ENCODE measurements at regions of chr14 and their contacts with region 1.

Region 1: DNA sequence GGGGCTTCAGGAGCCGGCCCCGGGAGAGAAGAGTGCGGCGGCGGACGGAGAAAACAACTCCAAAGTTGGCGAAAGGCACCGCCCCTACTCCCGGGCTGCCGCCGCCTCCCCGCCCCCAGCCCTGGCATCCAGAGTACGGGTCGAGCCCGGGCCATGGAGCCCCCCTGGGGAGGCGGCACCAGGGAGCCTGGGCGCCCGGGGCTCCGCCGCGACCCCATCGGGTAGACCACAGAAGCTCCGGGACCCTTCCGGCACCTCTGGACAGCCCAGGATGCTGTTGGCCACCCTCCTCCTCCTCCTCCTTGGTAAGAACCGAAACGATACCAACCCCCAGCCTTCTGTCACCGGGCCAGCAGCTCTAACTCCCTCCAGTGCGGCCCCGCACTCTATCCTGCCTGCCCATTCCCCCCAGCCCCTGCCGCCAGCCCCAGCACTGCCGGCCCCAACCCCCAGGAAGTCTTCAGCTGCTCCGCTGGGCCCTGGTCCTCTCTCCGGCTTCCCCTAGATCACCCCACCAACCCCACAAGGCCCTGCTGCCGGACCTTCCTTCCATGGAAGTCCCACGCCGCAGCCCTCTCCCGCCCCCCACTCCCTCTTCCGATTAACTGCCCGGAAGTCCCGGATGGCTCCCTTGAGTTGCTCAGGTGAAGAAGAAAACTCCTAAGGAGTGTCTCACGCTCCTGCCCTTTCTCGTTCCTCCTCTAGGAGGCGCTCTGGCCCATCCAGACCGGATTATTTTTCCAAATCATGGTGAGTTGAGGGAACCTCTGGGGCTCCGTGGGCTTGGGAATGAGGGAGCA is 693 bp downstream of the LRP10 start:
- DNase-seq: peak; percentile 94
- ATAC-seq: peak; percentile 51
- H3K4me3 ChIP-seq: peak overlapping the region; percentile 88
- H3K27ac ChIP-seq: peak overlapping the region; percentile 94
- H3K4me1 ChIP-seq: peaks cover 18% of the 10 kb centered on the region
- H3K27me3 ChIP-seq: no peaks in the 10 kb centered on the region
- CTCF ChIP-seq: peak; percentile 97

Region 2: DNA sequence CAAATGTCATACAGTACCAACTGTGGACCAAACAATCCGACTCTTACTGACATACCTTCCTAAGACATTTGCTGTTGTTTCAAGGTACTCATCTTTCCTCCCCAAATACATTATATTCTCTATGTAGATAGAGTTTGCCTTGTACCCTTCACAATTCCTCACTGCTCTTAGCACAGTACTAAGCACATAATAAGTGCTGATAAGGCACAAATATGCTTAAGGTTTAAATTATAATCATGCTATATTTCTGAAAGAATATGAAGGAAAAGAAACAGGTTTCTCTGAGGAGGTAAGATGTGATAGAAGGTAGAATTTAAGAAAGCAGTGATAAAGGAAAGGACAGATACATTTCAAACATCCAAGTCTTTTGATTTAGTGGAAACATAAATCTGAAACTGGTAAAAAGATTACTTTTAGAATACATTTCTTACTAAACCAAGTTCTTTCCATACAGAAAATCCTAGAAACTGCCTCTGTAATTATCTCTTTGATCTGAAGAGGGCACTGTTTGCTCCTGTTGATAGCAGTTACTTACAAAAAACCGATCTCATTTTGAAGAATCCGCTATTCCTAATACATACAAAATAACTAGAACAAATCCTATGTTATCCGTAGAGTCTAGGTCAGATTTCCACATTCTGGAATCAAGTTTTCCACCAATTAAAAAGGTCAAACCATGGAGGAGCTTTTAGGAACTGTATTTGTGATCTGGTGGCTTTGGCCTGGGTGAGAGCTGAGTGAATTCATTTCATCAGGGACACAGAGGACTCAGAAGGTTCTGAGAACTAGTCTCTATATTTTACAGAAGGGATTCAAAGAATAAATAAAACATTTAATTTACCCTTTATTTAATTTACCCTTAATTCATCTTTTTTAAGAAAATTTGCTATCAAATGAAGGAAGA is 595.1 kb before region 1 on chr14:
- CTCF ChIA-PET with region 1: no interaction called
- POLR2A ChIA-PET with region 1: no interaction called
- intact Hi-C with region 1: no loop called
- DNase-seq: peak; percentile 74
- ATAC-seq: no peak
- H3K4me3 ChIP-seq: no peak overlapping the region
- H3K27ac ChIP-seq: no peak overlapping the region
- H3K4me1 ChIP-seq: no peaks in the 10 kb centered on the region
- H3K27me3 ChIP-seq: no peaks in the 10 kb centered on the region
- CTCF ChIP-seq: peak; percentile 89

Region 3: GRCh38 chr14:22836301-22837113 is 35.7 kb before region 1 on chr14 and contains the start of gene MMP14:
- CTCF ChIA-PET with region 1: no interaction called
- POLR2A ChIA-PET with region 1: no interaction called
- intact Hi-C with region 1: no loop called
- DNase-seq: peak; percentile 65
- ATAC-seq: peak; percentile 79
- H3K4me3 ChIP-seq: peak within 1 kb of the TSS; percentile 93
- H3K27ac ChIP-seq: peak within 1 kb of the TSS; percentile 47
- H3K4me1 ChIP-seq: peaks cover 24% of the 10 kb centered on the region; the same call in 1 of the 2 replicates
- H3K27me3 ChIP-seq: no peaks in the 10 kb centered on the region
- CTCF ChIP-seq: peak; percentile 42
- total RNA-seq, gene MMP14: 80.4 and 85.0 TPM in 2 replicates

Region 4: DNA sequence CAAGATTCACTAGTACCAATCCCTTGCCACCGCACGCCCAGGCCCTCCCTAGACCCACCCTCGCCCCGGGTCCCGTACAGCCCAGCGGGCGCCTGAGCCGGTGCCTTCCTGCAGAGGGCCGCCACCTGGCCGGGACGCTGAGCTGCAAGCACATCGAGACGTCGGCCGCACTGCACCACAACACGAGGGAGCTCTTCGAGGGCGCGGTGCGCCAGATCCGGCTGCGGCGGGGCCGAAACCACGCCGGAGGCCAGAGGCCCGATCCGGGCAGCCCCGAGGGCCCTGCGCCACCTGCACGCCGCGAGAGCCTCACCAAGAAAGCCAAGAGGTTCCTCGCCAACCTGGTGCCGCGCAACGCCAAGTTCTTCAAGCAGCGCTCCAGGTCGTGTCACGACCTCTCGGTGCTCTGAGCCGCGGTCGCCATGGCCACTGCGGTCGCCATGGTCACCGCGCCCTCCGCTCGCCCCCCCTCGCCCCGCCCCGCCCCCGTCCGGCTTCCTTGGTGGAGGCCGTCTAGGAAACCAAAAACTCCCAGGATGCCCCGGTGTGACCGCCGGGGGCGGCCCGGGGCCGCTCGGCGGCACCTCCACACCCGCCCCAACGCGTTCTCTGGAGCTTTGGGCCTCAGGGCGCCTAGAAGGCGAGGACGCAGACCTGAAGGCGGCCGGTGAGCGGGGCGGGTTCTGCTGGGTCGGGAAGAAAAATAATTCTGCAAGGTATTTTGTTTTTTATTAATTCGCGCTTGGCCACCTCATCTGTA is 14.4 kb after region 1 on chr14:
- CTCF ChIA-PET with region 1: interaction called, 6 read pairs
- POLR2A ChIA-PET with region 1: interaction called, 3 read pairs
- intact Hi-C with region 1: loop called (anchors 1 kb)
- DNase-seq: peak; percentile 74
- ATAC-seq: peak; percentile 66
- H3K4me3 ChIP-seq: peak overlapping the region; percentile 68
- H3K27ac ChIP-seq: peak overlapping the region; percentile 67
- H3K4me1 ChIP-seq: peaks cover 29% of the 10 kb centered on the region
- H3K27me3 ChIP-seq: no peaks in the 10 kb centered on the region
- CTCF ChIP-seq: no peak; the same call in 1 of the 2 replicates

Region 5: GRCh38 chr14:22900081-22900799 is 28.0 kb after region 1 on chr14:
- CTCF ChIA-PET with region 1: no interaction called
- POLR2A ChIA-PET with region 1: no interaction called
- intact Hi-C with region 1: loop called (anchors 1 kb)
- DNase-seq: peak; percentile 80
- ATAC-seq: peak; percentile 70
- H3K4me3 ChIP-seq: no peak overlapping the region
- H3K27ac ChIP-seq: no peak overlapping the region
- H3K4me1 ChIP-seq: peaks cover 32% of the 10 kb centered on the region
- H3K27me3 ChIP-seq: no peaks in the 10 kb centered on the region
- CTCF ChIP-seq: peak; percentile 71

Region 6: DNA sequence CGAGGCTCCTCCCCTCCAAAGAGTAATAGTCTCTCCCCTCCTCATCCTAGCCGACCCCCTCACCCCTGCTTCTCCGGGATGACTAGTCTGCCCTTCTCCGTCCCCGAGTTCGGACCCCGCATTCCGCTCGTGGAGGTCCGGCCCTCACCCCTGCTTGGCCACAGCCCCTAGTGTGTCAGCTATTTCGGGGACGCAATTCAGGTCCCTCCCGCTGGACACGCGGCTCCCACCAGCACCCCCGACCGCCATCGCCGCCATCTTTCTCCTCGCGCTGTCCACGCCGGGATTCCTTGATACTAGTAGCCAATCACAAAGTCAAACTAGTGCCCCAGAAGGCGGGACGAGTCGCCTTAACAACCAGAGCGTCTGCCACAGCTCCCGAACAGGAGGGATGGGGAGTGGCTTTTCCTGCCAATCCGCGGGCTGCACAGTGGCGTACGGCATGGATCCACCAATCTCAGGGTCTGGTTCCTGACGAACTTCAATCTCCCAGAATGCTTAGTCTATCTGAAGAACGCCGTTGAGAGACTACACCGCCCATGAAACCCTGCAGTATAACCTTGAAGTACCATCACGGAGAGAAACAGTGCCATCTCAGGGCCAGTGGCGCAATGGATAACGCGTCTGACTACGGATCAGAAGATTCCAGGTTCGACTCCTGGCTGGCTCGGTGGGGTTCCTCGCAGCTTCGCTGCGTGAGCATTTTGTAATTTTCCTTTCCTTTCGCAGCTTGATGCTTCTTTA is 57.0 kb after region 1 on chr14 and contains the start of gene PRMT5:
- CTCF ChIA-PET with region 1: no interaction called
- POLR2A ChIA-PET with region 1: no interaction called
- intact Hi-C with region 1: loop called (anchors 5 kb)
- DNase-seq: peak; percentile 99
- ATAC-seq: peak; percentile 90
- H3K4me3 ChIP-seq: peak within 1 kb of the TSS; percentile 90
- H3K27ac ChIP-seq: peak within 1 kb of the TSS; percentile 54
- H3K4me1 ChIP-seq: peaks cover 30% of the 10 kb centered on the region
- H3K27me3 ChIP-seq: no peaks in the 10 kb centered on the region
- CTCF ChIP-seq: no peak
- total RNA-seq, gene PRMT5: 101 and 113 TPM in 2 replicates

Measured in PC-3 (cell line).